ENCODE measurements at regions of chr17 and their contacts with region 1.

Region 1: DNA sequence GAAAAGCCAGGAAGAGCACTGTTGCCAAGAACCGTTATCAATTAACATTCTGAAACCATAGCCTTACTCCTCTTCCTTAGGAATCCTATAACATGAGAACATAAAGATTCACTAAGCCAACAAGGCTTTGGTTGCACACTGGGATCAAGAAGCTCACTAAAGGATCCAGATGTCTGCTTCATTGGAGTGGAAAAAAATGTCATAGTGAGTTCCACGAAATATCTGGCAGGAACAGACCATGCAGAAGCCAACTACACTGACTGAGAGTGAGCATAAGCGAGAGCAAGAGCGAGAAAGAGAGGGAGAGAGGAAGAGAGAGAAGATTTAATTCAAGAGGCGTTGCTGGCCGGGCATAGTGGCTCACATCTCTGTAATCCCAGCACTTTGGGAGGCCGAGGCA is 13.4 kb upstream of the MEIOC start:
- DNase-seq: no peak
- H3K4me3 ChIP-seq: no peak overlapping the region
- H3K27ac ChIP-seq: no peak overlapping the region
- H3K27me3 ChIP-seq: peaks cover 9% of the 10 kb centered on the region
- CTCF ChIP-seq: no peak

Region 2: DNA sequence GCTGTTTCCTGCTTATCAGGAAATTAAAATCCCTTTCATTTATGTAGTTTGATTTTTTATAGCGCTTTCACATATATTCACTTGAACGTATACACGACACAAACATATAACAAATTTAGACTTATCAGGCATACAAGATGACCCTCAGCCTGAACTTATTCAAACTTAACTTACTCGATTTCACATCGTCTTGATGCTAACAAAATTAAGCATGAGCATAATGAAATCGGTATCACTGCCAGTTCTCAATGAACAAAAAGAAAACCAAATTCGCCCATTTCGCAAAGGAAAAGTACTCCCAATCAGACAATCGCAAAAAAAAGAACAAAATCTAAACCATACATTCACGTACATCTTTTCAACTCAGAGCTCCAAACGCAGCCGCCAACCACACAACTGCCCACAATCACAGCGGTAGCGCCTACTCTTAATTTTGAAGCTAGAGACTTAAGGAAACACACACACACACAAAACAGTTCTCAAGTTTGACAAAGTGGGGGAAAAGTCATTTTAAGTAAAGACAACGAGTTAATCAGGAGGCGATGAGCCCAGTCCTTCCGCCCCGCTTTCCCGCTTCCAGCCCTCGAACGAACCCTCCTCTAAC is 186.2 kb after region 1 on chr17:
- CTCF ChIA-PET with region 1: no interaction called
- POLR2A ChIA-PET with region 1: interaction called, 17 read pairs
- DNase-seq: no peak
- H3K4me3 ChIP-seq: peak overlapping the region; percentile 79
- H3K27ac ChIP-seq: no peak overlapping the region
- H3K27me3 ChIP-seq: no peaks in the 10 kb centered on the region
- CTCF ChIP-seq: no peak